T-cell (primary cell): ENCODE measurements at regions of chr1 and their contacts with region 1.

Region 1: DNA sequence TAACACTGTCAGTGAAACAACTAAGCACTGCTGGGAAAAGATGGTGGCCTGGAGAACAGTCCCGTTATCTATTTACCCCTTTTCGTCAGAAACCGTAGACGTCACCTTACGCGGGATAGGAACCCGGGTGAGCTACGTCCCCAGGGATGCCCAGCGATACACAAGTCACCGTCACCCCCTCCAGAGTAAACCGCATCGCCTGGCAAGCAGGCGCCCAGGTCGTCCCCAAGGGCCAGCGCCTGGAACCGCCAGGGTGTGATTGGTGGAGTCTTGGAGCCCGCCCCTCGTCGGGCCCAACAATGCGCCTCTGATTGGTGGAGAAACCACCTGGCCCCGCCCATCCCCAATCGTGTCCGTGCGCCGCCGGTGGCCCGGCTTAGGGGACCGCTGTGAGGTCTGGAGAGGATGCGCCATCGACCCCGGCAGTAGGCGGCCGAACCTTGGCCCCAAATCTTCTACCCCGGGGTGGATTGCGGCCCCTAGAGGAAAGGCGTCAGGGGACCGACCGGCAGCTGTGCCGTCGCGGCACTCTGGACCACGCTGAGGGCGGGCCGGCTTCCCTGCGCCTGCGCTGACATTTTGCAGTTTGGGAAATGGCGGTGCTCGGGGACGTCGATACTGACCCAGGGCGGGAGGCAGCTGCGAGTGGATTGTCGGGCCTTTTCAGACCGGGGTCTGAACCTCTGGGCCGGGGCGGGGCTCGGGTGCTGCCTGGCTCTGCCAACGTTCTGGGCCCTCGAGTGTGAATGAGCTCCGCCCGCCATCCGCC is 34.4 kb downstream of the SLC2A1 start:
- DNase-seq: peak; percentile 72 to 93 (median 88)
- ATAC-seq: peak; percentile 91 to 93 (median 92)
- H3K4me3 ChIP-seq: peak overlapping the region; percentile 83 to 90
- H3K4me3 Mint-ChIP-seq: peak overlapping the region; percentile 82 to 95 (median 86)
- H3K27ac ChIP-seq: peak overlapping the region; percentile 75
- H3K27ac Mint-ChIP-seq: peak overlapping the region; percentile 94 to 97
- H3K4me1 ChIP-seq: peaks cover 9 to 25% of the 10 kb centered on the region in 2 experiments
- H3K4me1 Mint-ChIP-seq: peaks cover 21 to 41% (median 34%) of the 10 kb centered on the region in 3 donors
- H3K27me3 ChIP-seq: no peaks in the 10 kb centered on the region
- H3K27me3 Mint-ChIP-seq: no peaks in the 10 kb centered on the region

Region 2: GRCh38 chr1:42613803-42614131 is 310.5 kb before region 1 on chr1:
- CTCF ChIA-PET with region 1: no interaction called
- POLR2A ChIA-PET with region 1: no interaction called
- DNase-seq: no peak
- ATAC-seq: no peak
- H3K4me3 ChIP-seq: no peak overlapping the region
- H3K4me3 Mint-ChIP-seq: no peak overlapping the region
- H3K27ac ChIP-seq: no peak overlapping the region
- H3K27ac Mint-ChIP-seq: no peak overlapping the region
- H3K4me1 ChIP-seq: no peaks in the 10 kb centered on the region
- H3K4me1 Mint-ChIP-seq: no peaks in the 10 kb centered on the region
- H3K27me3 ChIP-seq: no peaks in the 10 kb centered on the region
- H3K27me3 Mint-ChIP-seq: no peaks in the 10 kb centered on the region

Region 3: DNA sequence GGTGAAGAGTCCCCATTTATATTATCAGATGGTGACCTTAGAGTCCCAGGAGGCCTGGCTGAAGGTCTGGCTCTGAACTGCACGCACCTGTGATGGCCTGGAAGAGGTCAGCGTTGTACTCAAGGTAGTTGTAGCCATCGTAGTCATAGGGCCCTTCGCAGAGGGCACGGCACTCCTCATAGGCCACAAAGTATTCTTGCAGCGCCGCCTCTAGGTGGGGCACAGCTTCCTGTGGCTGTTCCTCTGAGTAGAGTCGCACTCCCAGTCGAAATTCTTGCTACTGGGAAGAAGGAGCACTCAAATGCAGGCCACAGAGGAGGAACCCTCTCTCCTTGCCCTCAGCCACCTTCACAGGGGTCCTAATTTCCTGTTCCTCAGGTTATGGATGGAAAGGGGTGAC is 165.2 kb before region 1 on chr1:
- CTCF ChIA-PET with region 1: interaction called in 1 of 2 experiments, 11 read pairs
- POLR2A ChIA-PET with region 1: no interaction called
- DNase-seq: no peak
- ATAC-seq: no peak
- H3K4me3 ChIP-seq: no peak overlapping the region
- H3K4me3 Mint-ChIP-seq: no peak overlapping the region
- H3K27ac ChIP-seq: no peak overlapping the region
- H3K27ac Mint-ChIP-seq: no peak overlapping the region
- H3K4me1 ChIP-seq: peaks cover 0 to 2% of the 10 kb centered on the region in 2 experiments
- H3K4me1 Mint-ChIP-seq: peaks cover 4 to 11% (median 7%) of the 10 kb centered on the region in 3 donors
- H3K27me3 ChIP-seq: no peaks in the 10 kb centered on the region
- H3K27me3 Mint-ChIP-seq: no peaks in the 10 kb centered on the region

Region 4: GRCh38 chr1:42913426-42914091 is 10.7 kb before region 1 on chr1:
- CTCF ChIA-PET with region 1: interaction called, 4 to 23 read pairs
- POLR2A ChIA-PET with region 1: no interaction called
- DNase-seq: peak in 30 of 35 experiments; percentile 30 to 87 (median 57)
- ATAC-seq: peak; percentile 66 to 84 (median 78)
- H3K4me3 ChIP-seq: no peak overlapping the region
- H3K4me3 Mint-ChIP-seq: no peak overlapping the region
- H3K27ac ChIP-seq: no peak overlapping the region
- H3K27ac Mint-ChIP-seq: no peak overlapping the region
- H3K4me1 ChIP-seq: no peaks in the 10 kb centered on the region
- H3K4me1 Mint-ChIP-seq: peaks cover 0 to 4% (median 4%) of the 10 kb centered on the region in 3 donors
- H3K27me3 ChIP-seq: peaks cover 0 to 6% of the 10 kb centered on the region in 2 experiments
- H3K27me3 Mint-ChIP-seq: no peaks in the 10 kb centered on the region

Region 5: DNA sequence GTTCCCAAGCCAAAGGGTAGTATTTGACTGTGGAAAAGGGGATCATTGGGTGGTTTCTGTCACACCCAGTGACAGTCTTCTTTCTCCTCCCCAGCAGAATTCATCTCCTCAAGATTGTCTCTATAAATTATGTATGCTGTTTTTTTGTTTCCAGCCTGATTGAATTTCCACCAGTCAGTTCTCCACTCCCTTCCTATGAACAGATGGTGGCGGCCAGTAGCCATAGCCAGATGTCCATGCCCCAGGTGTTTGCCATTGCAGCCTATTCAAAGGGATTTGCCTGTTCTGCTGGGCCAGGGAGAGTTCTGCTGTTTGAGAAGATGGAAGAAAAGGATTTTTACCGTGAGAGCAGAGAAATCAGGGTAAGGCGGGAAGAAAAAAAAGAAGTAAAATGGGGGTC is 260.7 kb after region 1 on chr1:
- CTCF ChIA-PET with region 1: no interaction called
- POLR2A ChIA-PET with region 1: no interaction called
- DNase-seq: no peak
- ATAC-seq: no peak
- H3K4me3 ChIP-seq: no peak overlapping the region
- H3K4me3 Mint-ChIP-seq: no peak overlapping the region
- H3K27ac ChIP-seq: no peak overlapping the region
- H3K27ac Mint-ChIP-seq: no peak overlapping the region
- H3K4me1 ChIP-seq: no peaks in the 10 kb centered on the region
- H3K4me1 Mint-ChIP-seq: no peaks in the 10 kb centered on the region
- H3K27me3 ChIP-seq: peaks cover 0 to 5% of the 10 kb centered on the region in 2 experiments
- H3K27me3 Mint-ChIP-seq: peaks cover 2 to 4% of the 10 kb centered on the region in 2 donors